ENCODE measurements at regions of chr6 and their contacts with region 1.

Region 1: GRCh38 chr6:36759148-36759759 is 61.6 kb downstream of the RAB44 start:
- DNase-seq: peak; percentile 24 to 90
- H3K4me3 ChIP-seq: no peak overlapping the region
- H3K27ac ChIP-seq: no peak overlapping the region
- H3K4me1 ChIP-seq: no peaks in the 10 kb centered on the region
- H3K27me3 ChIP-seq: no peaks in the 10 kb centered on the region
- CTCF ChIP-seq: peak; percentile 92 to 99 (median 98)

Region 2: DNA sequence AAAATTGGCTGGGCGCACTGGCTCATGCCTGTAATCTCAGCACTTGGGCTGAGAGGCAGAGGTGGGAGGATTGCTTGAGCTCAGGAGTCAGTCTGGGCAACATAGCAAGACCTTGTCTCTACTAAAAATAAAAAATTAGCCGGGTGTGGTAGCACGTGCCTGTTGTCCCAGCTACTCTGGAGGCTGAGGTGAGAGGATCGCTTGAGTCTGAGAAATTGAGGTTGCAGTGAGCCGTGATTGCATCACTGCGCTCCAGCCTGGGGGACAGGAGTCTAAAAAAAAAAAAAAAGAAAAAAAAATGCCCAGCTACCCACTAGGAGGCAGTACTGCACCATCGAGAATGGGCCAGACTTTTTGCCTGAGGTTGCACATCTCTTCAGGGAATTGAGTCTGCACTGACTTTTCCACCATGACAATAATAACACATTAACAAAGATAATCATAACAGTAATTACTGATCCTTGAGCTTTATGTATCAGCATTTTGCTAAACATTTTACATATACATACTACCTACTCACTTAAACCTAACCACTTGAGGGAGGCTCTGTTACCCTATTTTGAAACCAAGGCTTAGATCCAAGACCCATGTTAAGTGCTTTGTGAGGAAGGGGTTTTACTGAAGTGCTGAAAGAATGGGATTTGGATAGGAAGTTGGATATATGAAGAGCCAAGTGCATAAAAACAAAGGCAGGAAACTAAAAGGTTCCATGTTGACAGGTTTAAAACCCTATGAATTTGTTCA is 144.1 kb before region 1 on chr6:
- intact Hi-C with region 1: loop called (anchors 2 kb)
- DNase-seq: peak in 1 of 2 donors; percentile 73
- H3K4me3 ChIP-seq: no peak overlapping the region
- H3K27ac ChIP-seq: peak overlapping the region; percentile 36 to 40
- H3K4me1 ChIP-seq: peaks cover 0 to 9% of the 10 kb centered on the region in 2 donors
- H3K27me3 ChIP-seq: no peaks in the 10 kb centered on the region
- CTCF ChIP-seq: peak; percentile 61 to 68 (median 62)

Region 3: DNA sequence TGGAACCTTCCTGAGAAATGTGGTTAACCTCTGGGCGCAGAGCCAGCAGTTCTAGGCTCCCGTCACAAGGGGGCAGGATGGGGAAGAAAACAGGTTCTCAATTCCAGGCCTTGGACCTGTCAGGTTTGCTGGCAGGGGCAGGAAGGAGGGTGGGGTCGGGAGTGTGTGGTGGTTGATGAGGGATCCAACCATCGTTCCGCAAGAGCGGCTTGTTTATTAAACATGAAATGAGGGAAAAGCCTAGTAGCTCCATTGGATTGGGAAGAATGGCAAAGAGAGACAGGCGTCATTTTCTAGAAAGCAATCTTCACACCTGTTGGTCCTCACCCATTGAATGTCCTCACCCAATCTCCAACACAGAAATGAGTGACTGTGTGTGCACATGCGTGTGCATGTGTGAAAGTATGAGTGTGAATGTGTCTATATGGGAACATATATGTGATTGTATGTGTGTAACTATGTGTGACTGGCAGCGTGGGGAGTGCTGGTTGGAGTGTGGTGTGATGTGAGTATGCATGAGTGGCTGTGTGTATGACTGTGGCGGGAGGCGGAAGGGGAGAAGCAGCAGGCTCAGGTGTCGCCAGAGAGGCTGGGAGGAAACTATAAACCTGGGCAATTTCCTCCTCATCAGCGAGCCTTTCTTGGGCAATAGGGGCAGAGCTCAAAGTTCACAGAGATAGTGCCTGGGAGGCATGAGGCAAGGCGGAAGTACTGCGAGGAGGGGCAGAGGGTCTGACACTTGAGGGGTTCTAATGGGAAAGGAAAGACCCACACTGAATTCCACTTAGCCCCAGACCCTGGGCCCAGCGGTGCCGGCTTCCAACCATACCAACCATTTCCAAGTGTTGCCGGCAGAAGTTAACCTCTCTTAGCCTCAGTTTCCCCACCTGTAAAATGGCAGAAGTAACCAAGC is 135.5 kb before region 1 on chr6:
- intact Hi-C with region 1: loop called (anchors 1 kb)
- DNase-seq: peak; percentile 43 to 93
- H3K4me3 ChIP-seq: no peak overlapping the region
- H3K27ac ChIP-seq: no peak overlapping the region
- H3K4me1 ChIP-seq: peaks cover 18 to 46% of the 10 kb centered on the region in 2 donors
- H3K27me3 ChIP-seq: no peaks in the 10 kb centered on the region
- CTCF ChIP-seq: peak; percentile 82 to 96 (median 82)

Region 4: GRCh38 chr6:36692220-36692619 is 67.0 kb before region 1 on chr6:
- intact Hi-C with region 1: loop called (anchors 5 kb)
- DNase-seq: no peak
- H3K4me3 ChIP-seq: no peak overlapping the region
- H3K27ac ChIP-seq: no peak overlapping the region
- H3K4me1 ChIP-seq: peaks cover 2 to 4% of the 10 kb centered on the region in 2 donors
- H3K27me3 ChIP-seq: no peaks in the 10 kb centered on the region
- CTCF ChIP-seq: no peak

Region 5: DNA sequence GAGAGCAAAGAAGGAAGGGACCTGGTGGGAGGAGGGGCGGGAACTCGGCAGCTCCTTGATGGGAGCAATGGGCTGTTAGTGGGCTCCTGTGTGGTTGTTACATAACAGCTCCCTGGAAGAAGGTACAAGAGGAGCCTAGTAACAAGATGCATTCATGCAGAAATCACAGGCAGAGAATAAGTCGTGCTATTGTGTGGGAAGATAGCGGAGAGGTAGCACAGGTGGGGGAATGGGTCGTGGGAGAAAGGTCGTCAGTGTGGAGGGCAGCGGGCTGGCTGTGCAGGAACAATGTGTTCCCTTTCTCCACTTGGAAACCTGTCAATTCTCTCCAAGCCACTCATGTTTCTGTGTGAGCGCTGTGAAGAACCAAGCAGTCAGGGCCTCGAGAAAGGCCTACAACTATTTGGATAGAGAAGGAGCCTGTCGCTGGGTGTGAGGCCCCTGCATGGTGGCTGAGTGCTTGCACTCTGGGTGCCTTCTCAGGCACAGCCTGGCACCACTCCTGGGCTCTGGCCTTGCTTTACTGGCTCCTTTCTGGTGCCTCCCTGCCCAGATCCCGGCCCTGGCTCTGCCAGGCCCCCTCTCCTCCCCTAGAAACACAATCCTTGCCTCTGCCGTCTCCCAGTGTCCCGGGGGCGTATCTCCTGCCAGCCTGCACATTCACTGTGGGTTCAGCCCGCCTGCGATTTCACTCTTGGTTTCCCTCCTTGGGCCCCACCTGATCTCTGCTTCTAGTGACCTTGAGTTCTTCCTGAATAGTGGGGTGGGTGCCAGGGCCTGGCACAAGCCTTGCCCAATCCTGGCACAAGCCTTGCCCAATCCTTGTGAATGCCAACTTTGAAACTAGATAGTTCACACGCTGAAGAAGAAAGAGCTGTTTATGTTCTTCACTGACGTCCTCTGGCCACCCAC is 238.8 kb after region 1 on chr6:
- intact Hi-C with region 1: no loop called
- DNase-seq: no peak
- H3K4me3 ChIP-seq: no peak overlapping the region
- H3K27ac ChIP-seq: peak overlapping the region; percentile 47 to 64
- H3K4me1 ChIP-seq: peaks cover 0 to 14% of the 10 kb centered on the region in 2 donors
- H3K27me3 ChIP-seq: no peaks in the 10 kb centered on the region
- CTCF ChIP-seq: no peak